CD4-positive, alpha-beta T cell (primary cell): ENCODE measurements at regions of chr9 and their contacts with region 1.

Region 1: DNA sequence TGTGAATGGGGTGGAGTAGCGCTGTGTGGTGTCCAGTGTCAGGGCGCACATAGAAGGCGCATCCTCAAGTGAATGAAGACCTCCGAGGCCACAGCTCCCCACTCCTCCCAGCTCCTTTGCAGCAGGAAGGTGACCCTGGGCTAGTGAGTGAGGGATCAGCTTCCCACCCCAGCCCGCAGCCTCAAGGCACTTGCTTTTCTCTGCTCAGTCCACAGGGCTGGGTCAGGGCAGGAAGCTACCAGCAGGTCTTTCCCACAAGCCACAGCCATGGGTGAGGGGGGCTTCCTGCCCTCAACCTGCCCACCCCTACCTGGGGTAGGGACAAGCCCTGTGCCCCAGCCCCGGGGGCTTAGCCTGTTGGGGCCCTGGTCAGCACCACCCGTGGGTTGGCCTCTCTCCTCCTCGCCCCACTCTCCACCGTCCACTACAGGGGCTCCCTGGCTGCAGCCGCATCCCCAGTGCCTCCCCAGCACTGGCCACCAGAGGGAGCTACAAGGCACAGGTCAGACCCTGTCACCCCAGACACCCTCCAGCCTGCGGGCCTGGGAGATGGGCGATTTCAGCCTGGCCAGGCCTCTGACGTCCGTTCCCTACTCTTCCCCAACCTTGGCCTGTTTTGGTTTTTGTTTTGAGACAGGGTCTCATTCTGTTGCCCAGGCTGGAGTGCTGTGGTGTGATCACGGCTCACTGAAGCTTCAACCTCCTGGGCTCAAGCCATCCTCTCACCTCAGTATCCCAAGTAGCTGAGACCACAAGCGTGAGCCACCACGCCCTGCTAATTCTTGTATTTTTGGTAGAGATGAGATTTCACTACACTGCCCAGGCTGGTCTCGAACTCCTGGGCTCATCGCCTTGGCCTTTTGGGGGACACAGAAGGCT is 1.3 kb upstream of the ABCA2 start:
- DNase-seq: peak; percentile 49 to 82 (median 64)
- ATAC-seq: peak; percentile 27
- H3K4me3 ChIP-seq: peak overlapping the region; percentile 68
- H3K4me3 Mint-ChIP-seq: peak overlapping the region; percentile 90
- H3K27ac ChIP-seq: peak overlapping the region in 1 of 2 donors; percentile 7
- H3K27ac Mint-ChIP-seq: peak overlapping the region; percentile 55
- H3K4me1 ChIP-seq: peaks cover 82% of the 10 kb centered on the region
- H3K4me1 Mint-ChIP-seq: peaks cover 44% of the 10 kb centered on the region
- H3K27me3 ChIP-seq: no peaks in the 10 kb centered on the region
- H3K27me3 Mint-ChIP-seq: no peaks in the 10 kb centered on the region
- CTCF ChIP-seq: peak; percentile 67

Region 2: GRCh38 chr9:136750526-136750925 is 278.8 kb before region 1 on chr9:
- CTCF ChIA-PET with region 1: no interaction called
- POLR2A ChIA-PET with region 1: no interaction called
- intact Hi-C with region 1: no loop called
- DNase-seq: no peak
- ATAC-seq: no peak
- H3K4me3 ChIP-seq: no peak overlapping the region
- H3K4me3 Mint-ChIP-seq: no peak overlapping the region
- H3K27ac ChIP-seq: no peak overlapping the region
- H3K27ac Mint-ChIP-seq: no peak overlapping the region
- H3K4me1 ChIP-seq: no peaks in the 10 kb centered on the region
- H3K4me1 Mint-ChIP-seq: no peaks in the 10 kb centered on the region
- H3K27me3 ChIP-seq: peaks cover 0 to 2% of the 10 kb centered on the region in 2 experiments
- H3K27me3 Mint-ChIP-seq: peaks cover 15% of the 10 kb centered on the region
- CTCF ChIP-seq: no peak

Region 3: DNA sequence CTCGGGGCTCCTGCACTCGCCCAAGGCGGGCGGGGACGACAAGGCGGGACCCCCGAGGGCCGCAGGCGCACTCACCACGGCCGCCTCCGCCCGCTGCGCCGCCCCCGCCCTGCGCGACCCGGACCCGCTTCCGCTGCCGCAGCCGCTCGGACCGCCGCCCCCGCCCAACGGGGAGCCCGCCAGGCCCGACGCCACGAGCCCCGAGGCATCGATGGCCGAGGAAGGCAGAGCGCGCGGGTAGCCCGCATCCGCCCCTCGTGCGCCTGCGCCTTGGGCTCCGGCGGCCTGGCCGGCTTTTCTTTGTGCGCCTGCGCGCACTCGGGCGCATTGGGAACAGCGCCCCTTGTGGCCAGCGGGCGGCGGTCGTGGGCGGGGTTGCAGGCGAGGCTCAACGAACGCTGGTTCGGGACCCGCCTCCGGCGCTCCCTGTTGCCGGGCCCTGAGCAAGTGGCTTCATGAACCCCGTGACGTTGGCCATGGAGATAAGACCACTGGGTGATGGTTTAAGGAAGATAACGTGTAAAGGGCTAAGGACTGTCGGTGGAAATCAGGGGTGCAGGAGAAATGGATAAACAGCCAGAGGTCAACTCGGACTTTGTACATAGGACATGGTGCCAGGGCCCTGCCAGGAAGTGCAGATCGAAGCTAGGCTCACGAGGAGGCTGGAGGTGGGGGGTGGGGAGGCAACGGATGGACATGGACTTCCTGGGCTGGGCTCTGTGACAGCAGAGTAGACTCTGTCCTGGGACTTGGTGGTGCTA is 84.6 kb before region 1 on chr9 and contains the starts of genes C8G and FBXW5:
- CTCF ChIA-PET with region 1: interaction called, 13 read pairs
- POLR2A ChIA-PET with region 1: interaction called, 3 read pairs
- intact Hi-C with region 1: loop called in 1 of 2 experiments (anchors 1 kb)
- DNase-seq: peak; percentile 84 to 97 (median 94)
- ATAC-seq: peak; percentile 86
- H3K4me3 ChIP-seq: peak within 1 kb of the TSS; percentile 69
- H3K4me3 Mint-ChIP-seq: peak within 1 kb of the TSS; percentile 87
- H3K27ac ChIP-seq: peak within 1 kb of the TSS in 1 of 2 donors; percentile 21
- H3K27ac Mint-ChIP-seq: peak within 1 kb of the TSS; percentile 59
- H3K4me1 ChIP-seq: peaks cover 49% of the 10 kb centered on the region
- H3K4me1 Mint-ChIP-seq: peaks cover 5% of the 10 kb centered on the region
- H3K27me3 ChIP-seq: no peaks in the 10 kb centered on the region
- H3K27me3 Mint-ChIP-seq: no peaks in the 10 kb centered on the region
- CTCF ChIP-seq: peak; percentile 96
- total RNA-seq, gene C8G: not detected
- total RNA-seq, gene FBXW5: 41.0 to 41.7 TPM

Region 4: GRCh38 chr9:136991993-136992818 is 37.1 kb before region 1 on chr9 and contains the start of gene PAXX:
- CTCF ChIA-PET with region 1: interaction called, 9 read pairs
- POLR2A ChIA-PET with region 1: interaction called, 12 read pairs
- intact Hi-C with region 1: no loop called
- DNase-seq: peak; percentile 89 to 97 (median 94)
- ATAC-seq: peak; percentile 91
- H3K4me3 ChIP-seq: peak within 1 kb of the TSS; percentile 89
- H3K4me3 Mint-ChIP-seq: peak within 1 kb of the TSS; percentile 91
- H3K27ac ChIP-seq: peak within 1 kb of the TSS; percentile 57 to 76
- H3K27ac Mint-ChIP-seq: peak within 1 kb of the TSS; percentile 82
- H3K4me1 ChIP-seq: peaks cover 51% of the 10 kb centered on the region
- H3K4me1 Mint-ChIP-seq: peaks cover 35% of the 10 kb centered on the region
- H3K27me3 ChIP-seq: no peaks in the 10 kb centered on the region
- H3K27me3 Mint-ChIP-seq: peaks cover 8% of the 10 kb centered on the region
- CTCF ChIP-seq: no peak
- total RNA-seq, gene PAXX: 67.0 to 67.8 TPM

Region 5: GRCh38 chr9:137064027-137064879 is 35.0 kb after region 1 on chr9:
- CTCF ChIA-PET with region 1: interaction called, 13 read pairs
- POLR2A ChIA-PET with region 1: no interaction called
- intact Hi-C with region 1: loop called in 1 of 2 experiments (anchors 2 kb)
- DNase-seq: peak; percentile 34 to 80 (median 53)
- ATAC-seq: no peak
- H3K4me3 ChIP-seq: no peak overlapping the region
- H3K4me3 Mint-ChIP-seq: no peak overlapping the region
- H3K27ac ChIP-seq: no peak overlapping the region
- H3K27ac Mint-ChIP-seq: no peak overlapping the region
- H3K4me1 ChIP-seq: peaks cover 20% of the 10 kb centered on the region
- H3K4me1 Mint-ChIP-seq: peaks cover 6% of the 10 kb centered on the region
- H3K27me3 ChIP-seq: peaks cover 0 to 3% of the 10 kb centered on the region in 2 experiments
- H3K27me3 Mint-ChIP-seq: peaks cover 4% of the 10 kb centered on the region
- CTCF ChIP-seq: peak; percentile 84